Cardiac septum (tissue), 1 donor: ENCODE measurements at regions of chr9 and their contacts with region 1.

Region 1: GRCh38 chr9:693201-694091 is 148.1 kb upstream of the DMRT1 start:
- DNase-seq: no peak

Region 2: DNA sequence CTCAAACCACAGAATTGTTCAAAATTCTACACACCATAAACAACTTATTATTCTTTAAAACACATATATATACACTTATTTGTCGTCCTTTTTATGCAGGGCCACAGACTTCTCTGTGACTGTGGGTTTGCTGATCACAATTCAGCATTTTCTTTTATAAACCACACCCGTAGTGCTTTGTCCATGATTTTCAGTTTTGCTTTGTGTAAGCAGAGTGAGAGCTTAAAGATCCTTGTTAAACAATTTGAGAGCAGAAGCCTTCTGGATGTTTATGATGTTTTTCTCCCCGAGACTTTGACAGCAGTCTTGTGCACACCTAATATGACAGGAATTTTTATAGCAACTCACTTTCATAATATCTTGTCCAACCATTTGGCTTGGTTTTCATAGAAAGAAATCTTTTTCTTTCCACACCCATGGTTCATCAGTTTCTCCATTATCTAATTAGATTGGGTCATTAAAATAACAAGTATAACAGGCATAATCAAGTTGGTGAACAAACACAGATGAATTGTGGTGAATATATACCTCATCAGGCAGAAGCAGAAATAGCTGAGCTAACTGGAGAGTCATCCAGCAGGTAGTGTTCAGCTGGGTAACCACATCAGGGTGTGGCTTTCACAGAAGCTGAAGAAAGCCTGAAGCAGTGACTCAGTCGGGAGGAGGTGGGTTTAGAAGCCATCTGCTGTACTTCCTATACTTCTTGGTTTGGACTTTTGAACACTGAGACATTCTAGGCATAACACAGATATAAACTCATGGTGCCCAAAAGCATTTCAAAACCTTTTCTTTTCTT is 246.0 kb before region 1 on chr9:
- intact Hi-C with region 1: no loop called
- DNase-seq: no peak

Region 3: GRCh38 chr9:655875-656274 is 37.6 kb before region 1 on chr9:
- intact Hi-C with region 1: loop called (anchors 5 kb)
- DNase-seq: peak; percentile 91

Region 4: DNA sequence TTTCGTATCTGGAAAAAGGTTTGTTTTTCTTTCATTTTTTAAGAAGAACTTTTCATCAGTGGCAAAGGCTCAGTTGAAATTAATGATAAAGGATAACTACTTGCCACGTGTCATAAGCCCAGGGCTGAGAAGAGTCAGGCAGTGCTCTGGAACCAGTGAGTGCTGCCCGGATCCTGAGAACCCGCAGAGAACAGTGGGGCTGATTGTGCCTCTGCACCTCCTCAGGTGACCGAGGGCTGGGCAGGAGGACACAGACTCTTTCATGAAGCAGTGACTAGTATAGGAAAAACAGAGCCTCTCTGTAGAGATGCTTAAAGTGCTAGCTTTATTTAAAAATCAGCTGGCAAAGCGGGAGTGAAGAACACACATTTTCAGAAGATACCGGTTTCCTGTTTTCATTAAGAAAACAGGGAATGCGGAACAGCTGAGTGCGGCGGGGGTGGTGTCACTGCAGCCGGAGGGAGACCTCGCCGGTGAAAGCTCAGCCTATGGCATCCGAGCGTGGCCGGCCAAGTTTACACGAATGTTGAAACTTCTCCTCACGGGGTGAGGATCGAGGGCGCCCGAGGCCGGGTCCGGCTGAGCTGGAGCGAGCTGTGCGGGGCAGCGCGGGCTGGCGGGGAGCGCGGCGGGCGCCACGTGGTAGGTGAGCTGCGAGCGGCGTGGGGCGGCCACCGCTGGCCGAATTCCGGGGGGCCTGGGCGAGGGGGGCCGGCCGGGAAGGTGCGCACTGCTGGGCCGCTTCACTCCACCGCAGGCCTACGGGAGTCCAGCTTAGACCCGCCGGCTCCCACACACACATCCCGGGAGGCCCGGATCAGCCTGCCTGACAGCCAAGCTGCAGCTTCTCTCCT is 13.4 kb after region 1 on chr9:
- intact Hi-C with region 1: no loop called
- DNase-seq: peak; percentile 91

Region 5: GRCh38 chr9:738209-738915 is 44.9 kb after region 1 on chr9:
- intact Hi-C with region 1: loop called (anchors 5 kb)
- DNase-seq: peak; percentile 81

Region 6: DNA sequence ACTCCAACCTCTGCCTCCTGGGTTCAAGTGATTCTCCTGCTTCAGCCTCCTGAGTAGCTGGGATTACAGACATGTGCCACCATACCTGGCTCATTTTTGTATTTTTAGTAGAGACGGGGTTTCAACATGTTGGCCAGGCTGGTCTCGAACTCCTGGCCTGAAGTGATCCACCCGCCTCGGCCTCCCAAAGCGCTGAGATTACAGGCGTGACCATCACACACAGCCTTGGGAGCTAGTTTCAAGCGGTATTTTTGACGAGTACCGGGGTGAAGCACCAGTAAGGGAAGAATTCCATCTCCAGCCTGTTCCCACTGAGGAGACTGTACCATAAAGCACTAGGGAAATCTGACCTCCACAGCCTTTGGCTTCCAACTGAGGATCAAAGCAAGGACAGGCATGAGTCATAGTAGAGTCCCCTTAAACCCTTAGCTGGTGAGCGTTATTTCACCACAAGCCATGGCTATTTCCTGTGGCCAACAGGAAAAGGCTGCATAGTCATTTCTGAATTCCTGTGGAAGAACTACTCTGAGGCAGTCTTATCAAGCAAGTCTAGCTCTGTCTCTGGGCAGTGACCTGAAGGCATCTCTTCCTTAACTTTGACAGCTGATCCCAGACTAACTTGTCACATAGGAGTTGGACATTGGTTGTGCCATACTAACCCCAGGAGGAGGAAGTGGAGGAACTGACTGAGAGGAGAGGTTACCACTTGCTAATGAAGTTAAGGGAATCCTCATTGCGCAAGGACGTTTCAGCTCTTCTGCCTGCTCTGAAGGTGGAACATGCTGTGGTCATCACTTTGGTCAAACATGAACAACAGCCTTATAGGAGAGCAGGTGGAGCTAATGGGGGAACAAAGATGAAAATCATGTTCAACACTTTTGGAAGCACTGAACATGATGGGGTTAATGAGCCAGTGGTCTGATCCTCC is 62.3 kb after region 1 on chr9:
- intact Hi-C with region 1: loop called (anchors 5 kb)
- DNase-seq: no peak